Activated CD4-positive, alpha-beta T cell treated with anti-CD3 and anti-CD28 coated beads for 36 hours (primary cell): ENCODE measurements at regions of chr19 and their contacts with region 1.

Region 1: GRCh38 chr19:19361075-19361594 is 40.5 kb downstream of the MAU2 start:
- DNase-seq: peak; percentile 88
- ATAC-seq: peak; percentile 76
- H3K4me3 Mint-ChIP-seq: no peak overlapping the region
- H3K27ac Mint-ChIP-seq: peak overlapping the region; percentile 31
- H3K4me1 Mint-ChIP-seq: peaks cover 31% of the 10 kb centered on the region
- H3K27me3 Mint-ChIP-seq: no peaks in the 10 kb centered on the region

Region 2: DNA sequence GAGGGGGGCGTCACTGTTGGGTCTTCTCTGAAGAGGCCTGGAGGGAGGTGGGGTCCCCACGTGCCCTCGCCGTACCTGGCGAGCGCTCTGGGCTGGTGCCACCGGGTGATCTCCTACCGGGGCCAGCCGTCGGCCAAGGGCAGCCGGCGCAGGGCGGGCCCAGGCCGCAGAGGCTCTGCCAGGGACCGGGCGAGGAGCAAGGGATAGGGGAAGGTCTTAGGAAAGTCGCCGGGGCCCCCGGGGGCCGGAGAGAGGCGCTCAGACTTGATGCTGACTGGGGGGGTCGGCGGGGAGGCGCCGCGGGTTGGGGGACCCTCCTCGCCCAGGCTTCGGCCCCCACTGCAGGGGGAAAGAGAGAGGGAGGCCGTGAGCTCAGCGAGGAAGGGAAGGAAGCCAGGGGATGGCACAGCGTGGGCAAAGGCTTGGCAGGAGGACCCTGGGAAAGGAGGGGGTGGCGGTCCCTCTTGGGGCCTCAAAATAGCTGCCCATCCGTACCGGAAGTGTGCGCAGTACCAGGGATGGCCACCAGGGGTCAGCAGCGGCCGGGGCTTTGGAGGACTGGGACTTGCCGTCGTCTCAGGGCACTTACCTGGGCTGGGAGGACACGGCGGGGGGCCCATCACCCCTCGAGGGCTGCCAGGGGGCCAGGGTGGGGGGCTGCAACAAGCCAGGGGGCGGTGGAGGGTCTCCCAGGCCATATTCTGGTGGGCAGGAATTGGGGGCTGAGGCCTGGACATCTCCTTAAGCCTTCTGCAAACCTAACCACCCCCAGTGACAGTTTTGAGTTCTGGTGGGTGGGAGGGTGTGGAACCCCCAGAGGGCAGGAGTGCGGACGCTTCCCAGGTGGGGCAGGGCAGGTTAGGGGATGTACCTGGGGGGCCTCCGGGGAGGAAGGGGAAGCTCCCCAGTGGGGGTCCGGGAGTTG is 215.2 kb before region 1 on chr19:
- CTCF ChIA-PET with region 1: no interaction called
- POLR2A ChIA-PET with region 1: no interaction called
- intact Hi-C with region 1: loop called in 1 of 2 experiments (anchors 1 kb)
- DNase-seq: peak; percentile 93
- ATAC-seq: peak; percentile 88
- H3K4me3 Mint-ChIP-seq: no peak overlapping the region
- H3K27ac Mint-ChIP-seq: no peak overlapping the region
- H3K4me1 Mint-ChIP-seq: no peaks in the 10 kb centered on the region
- H3K27me3 Mint-ChIP-seq: no peaks in the 10 kb centered on the region

Region 3: DNA sequence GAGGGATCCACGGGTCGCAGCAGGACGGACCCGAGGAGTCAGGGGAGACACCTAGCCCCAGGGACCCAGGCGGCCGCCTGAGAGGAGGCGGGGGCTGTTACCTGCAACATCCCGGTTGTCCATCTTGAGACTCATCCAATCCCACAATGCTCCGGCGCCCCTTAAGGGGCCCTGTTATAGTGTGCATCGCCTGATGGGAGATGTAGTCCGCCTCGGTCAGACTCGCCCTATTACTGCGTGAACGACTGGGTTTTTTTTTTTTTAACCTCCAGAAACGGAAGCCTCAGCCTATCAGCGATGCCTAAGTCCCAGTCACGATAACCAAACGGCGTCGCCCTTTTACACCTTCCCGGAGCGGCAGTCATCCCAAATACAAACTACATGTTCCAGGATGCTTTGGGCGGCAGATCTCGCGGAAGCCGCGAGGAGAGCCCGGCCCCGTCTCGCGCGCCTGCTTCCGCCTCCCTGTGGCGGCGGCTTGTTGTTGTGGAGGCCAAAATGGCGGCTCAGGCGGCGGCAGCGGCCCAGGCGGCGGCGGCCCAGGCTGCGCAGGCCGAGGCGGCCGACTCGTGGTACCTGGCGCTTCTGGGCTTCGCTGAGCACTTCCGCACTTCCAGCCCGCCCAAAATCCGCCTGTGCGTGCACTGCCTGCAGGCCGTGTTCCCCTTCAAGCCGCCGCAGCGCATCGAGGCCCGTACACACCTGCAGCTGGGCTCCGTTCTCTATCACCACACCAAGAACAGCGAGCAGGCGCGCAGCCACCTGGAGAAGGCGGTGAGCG is 40.6 kb before region 1 on chr19 and contains the starts of genes MAU2 and SUGP1:
- CTCF ChIA-PET with region 1: no interaction called
- POLR2A ChIA-PET with region 1: interaction called, 3 read pairs
- intact Hi-C with region 1: loop called in 1 of 2 experiments (anchors 2 kb)
- DNase-seq: peak; percentile 96
- ATAC-seq: peak; percentile 93
- H3K4me3 Mint-ChIP-seq: peak within 1 kb of the TSS; percentile 93
- H3K27ac Mint-ChIP-seq: peak within 1 kb of the TSS; percentile 100
- H3K4me1 Mint-ChIP-seq: peaks cover 39% of the 10 kb centered on the region
- H3K27me3 Mint-ChIP-seq: no peaks in the 10 kb centered on the region
- total RNA-seq, gene MAU2: 33.3 to 45.7 TPM
- total RNA-seq, gene SUGP1: 49.4 to 62.0 TPM

Region 4: GRCh38 chr19:19372656-19373416 is 11.7 kb after region 1 on chr19:
- CTCF ChIA-PET with region 1: interaction called, 11 read pairs
- POLR2A ChIA-PET with region 1: no interaction called
- intact Hi-C with region 1: no loop called
- DNase-seq: peak; percentile 56
- ATAC-seq: peak; percentile 94
- H3K4me3 Mint-ChIP-seq: peak overlapping the region; percentile 45
- H3K27ac Mint-ChIP-seq: peak overlapping the region; percentile 92
- H3K4me1 Mint-ChIP-seq: peaks cover 6% of the 10 kb centered on the region
- H3K27me3 Mint-ChIP-seq: no peaks in the 10 kb centered on the region